Activated CD4-positive, alpha-beta memory T cell treated with anti-CD3 and anti-CD28 coated beads for 36 hours (primary cell): ENCODE measurements at regions of chr22 and their contacts with region 1.

Region 1: GRCh38 chr22:36856121-36856791 is 4.5 kb upstream of the NCF4 start:
- DNase-seq: peak; percentile 96
- H3K4me3 Mint-ChIP-seq: no peak overlapping the region
- H3K27ac Mint-ChIP-seq: no peak overlapping the region
- H3K4me1 Mint-ChIP-seq: peaks cover 28% of the 10 kb centered on the region
- H3K27me3 Mint-ChIP-seq: peaks cover 2% of the 10 kb centered on the region

Region 2: DNA sequence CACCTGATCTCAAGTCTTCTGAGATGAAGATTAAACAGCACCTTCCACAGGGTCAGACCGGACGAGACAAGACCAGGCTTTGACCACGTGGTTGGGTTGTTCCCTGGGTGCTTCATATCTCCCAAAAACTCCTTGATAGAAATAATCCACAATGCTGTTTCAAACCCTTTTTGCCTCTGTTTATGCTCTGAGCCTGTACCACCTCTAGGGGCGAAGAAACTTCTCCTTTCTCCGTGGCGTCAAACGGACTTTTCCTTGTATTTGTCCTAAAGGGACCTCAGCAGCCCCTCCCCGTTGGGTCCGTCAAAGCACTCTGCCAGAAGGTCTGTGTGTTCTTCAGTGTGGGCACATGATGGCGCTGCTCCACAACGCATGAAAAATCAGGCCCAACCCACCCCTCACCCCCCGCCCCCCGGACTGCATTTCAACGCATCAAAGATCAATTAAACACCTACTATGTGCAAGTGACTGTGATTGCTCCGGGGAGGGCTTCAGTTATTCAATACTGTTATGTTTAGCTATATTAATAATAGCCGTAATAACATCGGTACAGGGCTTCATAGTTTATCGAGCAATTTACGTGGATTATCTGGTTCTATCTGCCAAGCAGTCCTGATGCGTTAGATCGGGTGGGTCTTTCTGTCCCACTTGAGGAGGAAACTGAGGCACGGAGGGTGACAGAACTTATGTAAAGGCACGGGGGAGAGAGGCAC is 310.0 kb before region 1 on chr22:
- CTCF ChIA-PET with region 1: interaction called, 10 read pairs
- POLR2A ChIA-PET with region 1: no interaction called
- intact Hi-C with region 1: loop called (anchors 5 kb)
- DNase-seq: peak; percentile 57
- H3K4me3 Mint-ChIP-seq: no peak overlapping the region
- H3K27ac Mint-ChIP-seq: no peak overlapping the region
- H3K4me1 Mint-ChIP-seq: peaks cover 16% of the 10 kb centered on the region
- H3K27me3 Mint-ChIP-seq: peaks cover 10% of the 10 kb centered on the region

Region 3: GRCh38 chr22:36775964-36776669 is 80.1 kb before region 1 on chr22 and contains the start of gene IFT27:
- CTCF ChIA-PET with region 1: interaction called, 76 read pairs
- POLR2A ChIA-PET with region 1: interaction called, 3 read pairs
- intact Hi-C with region 1: loop called (anchors 1 kb)
- DNase-seq: peak; percentile 99
- H3K4me3 Mint-ChIP-seq: peak within 1 kb of the TSS; percentile 84
- H3K27ac Mint-ChIP-seq: peak within 1 kb of the TSS; percentile 90
- H3K4me1 Mint-ChIP-seq: peaks cover 30% of the 10 kb centered on the region
- H3K27me3 Mint-ChIP-seq: no peaks in the 10 kb centered on the region
- total RNA-seq, gene IFT27: 27.9 to 32.1 TPM

Region 4: DNA sequence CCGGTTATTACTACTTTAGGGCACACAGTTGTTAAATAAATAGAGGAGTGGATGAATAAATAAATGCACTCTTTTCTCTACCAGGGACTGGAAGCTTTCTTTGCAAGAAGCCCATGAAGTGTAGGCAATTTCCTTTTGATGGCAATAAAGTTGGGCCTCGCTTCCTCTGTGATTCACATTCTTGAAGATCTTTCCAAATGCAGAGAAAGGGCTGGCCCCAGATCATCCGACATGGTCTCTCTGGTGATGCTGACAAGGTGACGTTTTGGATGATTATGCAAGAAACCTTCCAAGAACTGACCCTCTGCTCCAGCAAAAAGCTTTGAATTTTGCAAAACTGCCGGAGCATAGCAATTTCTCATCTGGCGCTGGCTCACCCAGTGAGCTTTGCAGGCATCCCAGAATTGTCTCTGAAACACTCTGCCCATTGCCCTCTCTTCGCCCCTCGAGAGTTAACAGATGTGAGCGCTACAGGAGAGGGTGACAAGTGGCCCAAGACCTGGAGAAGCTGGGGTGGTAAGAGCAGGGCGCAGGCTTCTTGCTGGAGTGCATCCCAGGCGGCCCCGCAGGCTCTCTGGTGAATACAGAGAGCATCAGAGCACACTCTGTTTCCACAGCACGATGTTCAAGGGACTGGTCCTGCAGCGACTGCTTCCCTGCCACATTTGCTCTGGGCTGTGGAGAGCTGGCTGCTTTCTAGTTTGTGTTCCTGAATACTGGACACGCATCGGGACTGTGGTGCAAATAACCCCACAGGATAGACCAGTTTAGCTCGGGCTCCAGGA is 68.9 kb before region 1 on chr22:
- CTCF ChIA-PET with region 1: interaction called, 76 read pairs
- POLR2A ChIA-PET with region 1: no interaction called
- intact Hi-C with region 1: loop called (anchors 1 kb)
- DNase-seq: no peak
- H3K4me3 Mint-ChIP-seq: no peak overlapping the region
- H3K27ac Mint-ChIP-seq: no peak overlapping the region
- H3K4me1 Mint-ChIP-seq: peaks cover 10% of the 10 kb centered on the region
- H3K27me3 Mint-ChIP-seq: peaks cover 4% of the 10 kb centered on the region

Region 5: DNA sequence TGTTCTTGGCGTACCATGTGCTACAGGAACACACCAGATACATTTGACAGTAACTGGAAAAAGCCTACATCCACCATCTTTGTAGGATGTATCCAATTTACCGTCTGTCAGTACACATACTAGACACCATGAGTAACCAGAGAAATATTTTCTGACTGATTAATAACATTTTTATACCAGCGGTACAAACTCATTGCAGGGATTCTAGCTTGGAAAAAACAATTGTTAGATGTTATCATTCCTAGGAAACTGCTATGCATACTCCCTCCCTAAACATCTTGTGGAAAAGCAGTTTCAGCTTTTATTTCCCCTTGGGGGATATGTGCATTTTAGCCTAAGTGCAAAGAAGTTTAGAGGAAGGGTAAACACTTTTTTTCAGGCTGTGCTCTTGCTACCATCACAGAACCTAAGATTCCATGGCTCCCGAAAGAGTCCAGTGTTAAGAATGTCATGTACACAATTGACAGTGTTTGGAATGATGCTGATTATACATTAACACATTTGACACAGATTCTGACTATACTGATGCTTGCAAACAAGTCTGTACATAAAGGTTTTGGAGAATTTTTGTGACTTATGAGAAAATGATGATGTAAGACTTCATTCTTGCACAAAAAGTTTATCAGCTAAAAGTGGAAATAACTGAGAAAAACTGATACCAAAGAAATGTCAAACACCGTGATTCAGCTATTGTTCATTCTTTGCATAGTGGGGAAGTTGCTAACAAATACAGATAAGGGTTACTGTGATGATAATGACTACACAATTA is 28.3 kb after region 1 on chr22:
- CTCF ChIA-PET with region 1: interaction called, 72 read pairs
- POLR2A ChIA-PET with region 1: interaction called, 6 read pairs
- intact Hi-C with region 1: no loop called
- DNase-seq: no peak
- H3K4me3 Mint-ChIP-seq: no peak overlapping the region
- H3K27ac Mint-ChIP-seq: peak overlapping the region; percentile 56
- H3K4me1 Mint-ChIP-seq: peaks cover 39% of the 10 kb centered on the region
- H3K27me3 Mint-ChIP-seq: peaks cover 3% of the 10 kb centered on the region

Region 6: DNA sequence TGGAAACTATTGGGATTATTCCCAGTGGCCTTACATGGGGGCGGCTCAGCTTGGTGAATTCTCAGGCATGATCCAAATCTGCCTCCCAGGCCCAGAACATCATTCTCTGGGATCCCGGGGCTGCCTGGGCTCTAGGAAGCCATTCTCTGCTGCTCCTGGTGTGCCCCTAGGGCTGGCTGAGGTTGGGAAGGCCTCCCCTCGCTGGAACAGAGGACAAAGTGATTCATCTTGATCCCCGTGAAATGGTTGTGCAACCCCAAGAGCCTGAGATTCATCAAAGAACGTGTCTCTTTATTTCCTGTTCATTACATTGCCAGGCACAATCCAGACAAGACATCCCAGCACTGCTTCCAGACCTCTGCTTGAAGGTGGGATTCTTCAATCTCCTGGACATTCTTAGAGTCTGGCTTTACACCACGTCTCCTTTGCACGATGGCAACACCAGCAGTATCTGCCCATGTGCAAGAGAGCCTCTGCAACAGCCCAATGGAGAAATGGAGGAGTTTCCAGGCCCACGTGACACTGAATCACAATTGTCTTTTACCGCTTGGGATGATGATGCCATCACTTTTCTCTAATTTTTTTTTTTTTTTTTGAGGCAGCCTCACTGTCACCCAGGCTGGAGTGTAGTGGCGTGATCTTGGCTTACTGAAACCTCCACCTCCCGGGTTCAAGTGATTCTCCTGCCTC is 110.7 kb after region 1 on chr22:
- CTCF ChIA-PET with region 1: interaction called, 10 read pairs
- POLR2A ChIA-PET with region 1: no interaction called
- intact Hi-C with region 1: no loop called
- DNase-seq: no peak
- H3K4me3 Mint-ChIP-seq: no peak overlapping the region
- H3K27ac Mint-ChIP-seq: no peak overlapping the region
- H3K4me1 Mint-ChIP-seq: no peaks in the 10 kb centered on the region
- H3K27me3 Mint-ChIP-seq: no peaks in the 10 kb centered on the region